B cell (primary cell): ENCODE measurements at regions of chr10 and their contacts with region 1.

Region 1: GRCh38 chr10:62082729-62083411 is 181.4 kb downstream of the ARID5B start:
- DNase-seq: no peak
- ATAC-seq: peak; percentile 29
- H3K4me3 ChIP-seq: peak overlapping the region; percentile 10 to 38 (median 36)
- H3K4me3 Mint-ChIP-seq: peak overlapping the region; percentile 79
- H3K27ac ChIP-seq: peak overlapping the region; percentile 90 to 91
- H3K27ac Mint-ChIP-seq: peak overlapping the region; percentile 86
- H3K4me1 ChIP-seq: peaks cover 76 to 78% of the 10 kb centered on the region in 2 donors
- H3K4me1 Mint-ChIP-seq: peaks cover 79% of the 10 kb centered on the region
- H3K27me3 ChIP-seq: no peaks in the 10 kb centered on the region
- H3K27me3 Mint-ChIP-seq: no peaks in the 10 kb centered on the region
- CTCF ChIP-seq: no peak

Region 2: DNA sequence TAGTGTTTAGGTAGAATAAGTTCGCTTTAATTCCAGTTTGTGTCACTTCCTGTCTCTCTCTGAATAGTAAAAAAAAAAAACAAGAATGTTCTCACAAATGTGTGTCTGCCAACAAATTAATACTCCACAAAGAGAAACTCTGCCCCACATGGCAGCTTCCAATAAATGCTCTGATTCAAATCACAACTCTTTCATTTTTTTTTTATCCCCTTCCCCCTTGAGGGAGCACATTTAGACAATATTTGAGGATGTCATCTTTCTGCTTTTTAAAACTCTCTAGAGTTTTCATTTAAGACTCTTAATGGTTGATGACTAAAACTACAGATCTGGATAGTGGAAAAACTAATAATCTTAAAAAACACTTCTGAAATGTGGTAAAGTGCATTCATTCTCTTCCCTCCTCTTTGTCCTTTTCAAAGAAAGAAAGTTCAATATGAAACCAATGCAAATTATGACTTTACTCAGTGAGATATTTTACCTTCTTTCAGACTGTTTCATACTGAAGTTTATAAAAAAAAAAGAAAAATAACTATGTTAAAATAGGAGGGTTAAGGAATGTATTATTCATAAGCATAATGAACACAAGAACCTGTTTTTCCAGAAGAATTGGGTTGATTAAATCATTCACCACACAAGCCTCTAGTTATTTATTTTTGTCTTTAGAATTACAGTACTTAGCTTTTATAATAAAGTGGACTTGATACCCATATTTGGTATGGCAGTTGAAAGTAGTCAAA is 139.0 kb before region 1 on chr10:
- CTCF ChIA-PET with region 1: no interaction called
- POLR2A ChIA-PET with region 1: no interaction called
- intact Hi-C with region 1: no loop called
- DNase-seq: peak; percentile 71
- ATAC-seq: peak; percentile 21
- H3K4me3 ChIP-seq: no peak overlapping the region
- H3K4me3 Mint-ChIP-seq: peak overlapping the region; percentile 74
- H3K27ac ChIP-seq: peak overlapping the region; percentile 86 to 91
- H3K27ac Mint-ChIP-seq: peak overlapping the region; percentile 86
- H3K4me1 ChIP-seq: peaks cover 58 to 61% of the 10 kb centered on the region in 2 donors
- H3K4me1 Mint-ChIP-seq: peaks cover 54% of the 10 kb centered on the region
- H3K27me3 ChIP-seq: no peaks in the 10 kb centered on the region
- H3K27me3 Mint-ChIP-seq: no peaks in the 10 kb centered on the region
- CTCF ChIP-seq: no peak

Region 3: GRCh38 chr10:62071846-62072281 is 11.0 kb before region 1 on chr10:
- CTCF ChIA-PET with region 1: no interaction called
- POLR2A ChIA-PET with region 1: no interaction called
- intact Hi-C with region 1: no loop called
- DNase-seq: no peak
- ATAC-seq: no peak
- H3K4me3 ChIP-seq: no peak overlapping the region
- H3K4me3 Mint-ChIP-seq: no peak overlapping the region
- H3K27ac ChIP-seq: peak overlapping the region in 1 of 2 donors; percentile 14
- H3K27ac Mint-ChIP-seq: peak overlapping the region; percentile 65
- H3K4me1 ChIP-seq: peaks cover 4 to 11% of the 10 kb centered on the region in 2 donors
- H3K4me1 Mint-ChIP-seq: peaks cover 58% of the 10 kb centered on the region
- H3K27me3 ChIP-seq: no peaks in the 10 kb centered on the region
- H3K27me3 Mint-ChIP-seq: no peaks in the 10 kb centered on the region
- CTCF ChIP-seq: no peak

Region 4: DNA sequence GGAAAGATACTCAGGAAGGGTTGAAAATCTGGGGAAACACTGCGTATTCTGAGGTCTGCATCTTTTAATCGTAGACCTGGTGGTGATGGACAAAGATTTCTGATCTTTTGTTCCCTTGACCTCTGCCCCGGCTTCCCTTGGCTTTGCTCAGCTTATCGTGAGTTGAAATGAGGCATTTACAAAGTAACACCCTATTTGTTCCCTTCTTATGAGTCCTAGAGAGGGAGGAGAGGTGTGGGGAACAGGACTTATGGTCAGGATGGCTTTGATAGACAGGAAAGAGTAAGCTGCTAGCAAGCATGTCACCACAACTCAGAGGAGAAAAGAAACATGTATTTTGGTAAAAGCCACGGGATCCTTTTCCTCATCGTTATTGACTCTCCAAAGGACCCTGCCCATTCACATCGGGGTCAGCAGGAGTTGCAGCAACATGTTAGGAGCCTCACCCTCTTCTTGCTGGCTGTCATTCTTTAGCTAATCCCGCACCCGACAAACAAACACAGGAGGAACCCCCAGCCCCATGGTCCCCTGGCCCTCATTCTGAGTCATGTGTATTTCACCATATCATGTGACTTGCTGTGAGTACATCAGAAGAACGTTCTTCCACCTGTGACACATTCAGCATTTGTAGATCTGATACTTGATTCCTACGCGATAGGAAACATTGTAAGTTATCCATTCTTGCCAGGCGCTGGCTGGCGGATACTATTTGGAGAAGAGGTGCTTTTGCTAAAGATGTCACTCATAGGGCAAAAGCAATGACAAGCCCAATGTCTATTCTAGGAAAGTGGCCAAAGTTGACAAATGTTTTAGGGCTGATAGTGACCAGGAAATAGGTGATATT is 15.6 kb after region 1 on chr10:
- CTCF ChIA-PET with region 1: interaction called, 4 read pairs
- POLR2A ChIA-PET with region 1: interaction called, 3 read pairs
- intact Hi-C with region 1: loop called (anchors 2 kb)
- DNase-seq: no peak
- ATAC-seq: peak; percentile 18
- H3K4me3 ChIP-seq: no peak overlapping the region
- H3K4me3 Mint-ChIP-seq: no peak overlapping the region
- H3K27ac ChIP-seq: peak overlapping the region in 1 of 2 donors; percentile 13
- H3K27ac Mint-ChIP-seq: peak overlapping the region; percentile 26
- H3K4me1 ChIP-seq: peaks cover 0 to 7% of the 10 kb centered on the region in 2 donors
- H3K4me1 Mint-ChIP-seq: peaks cover 34% of the 10 kb centered on the region
- H3K27me3 ChIP-seq: no peaks in the 10 kb centered on the region
- H3K27me3 Mint-ChIP-seq: no peaks in the 10 kb centered on the region
- CTCF ChIP-seq: no peak

Region 5: DNA sequence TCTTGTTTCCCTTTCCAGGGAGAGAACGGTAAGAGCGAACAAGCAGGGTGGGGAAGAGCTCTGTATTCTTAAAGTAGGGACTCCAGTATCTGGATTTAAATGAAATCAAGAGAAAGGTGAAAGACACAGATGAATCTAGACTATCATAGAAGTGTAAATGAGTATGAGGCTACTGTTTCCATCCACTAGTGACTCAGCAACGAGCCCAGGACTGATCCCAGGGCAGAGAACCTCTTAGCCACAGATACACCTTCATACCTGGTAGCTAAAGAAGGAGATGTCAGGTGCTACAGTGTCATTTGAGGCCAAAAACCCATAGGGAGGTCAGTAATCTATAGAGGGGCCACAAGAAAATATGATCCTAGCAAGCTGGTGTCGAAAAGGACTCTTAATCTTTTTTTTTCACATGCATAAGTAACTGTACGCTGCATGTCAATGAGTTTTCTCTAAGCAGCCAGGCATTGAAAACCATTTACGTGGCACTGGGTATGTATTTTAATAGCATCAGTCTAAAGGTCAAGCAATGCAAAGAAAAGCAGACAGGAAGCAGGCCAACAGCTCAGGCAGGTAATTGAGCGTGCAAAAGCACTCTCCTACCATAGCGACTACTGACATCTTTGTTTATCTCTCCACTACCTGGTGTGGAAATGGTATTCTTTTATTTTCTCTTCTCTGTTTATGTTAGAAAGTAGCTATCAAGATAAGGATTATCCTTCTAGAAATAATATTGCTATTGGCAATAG is 824.8 kb after region 1 on chr10:
- CTCF ChIA-PET with region 1: no interaction called
- POLR2A ChIA-PET with region 1: no interaction called
- intact Hi-C with region 1: no loop called
- DNase-seq: no peak
- ATAC-seq: peak; percentile 61
- H3K4me3 ChIP-seq: no peak overlapping the region
- H3K4me3 Mint-ChIP-seq: peak overlapping the region; percentile 13
- H3K27ac ChIP-seq: no peak overlapping the region
- H3K27ac Mint-ChIP-seq: no peak overlapping the region
- H3K4me1 ChIP-seq: peaks cover 35% of the 10 kb centered on the region in 2 donors
- H3K4me1 Mint-ChIP-seq: peaks cover 50% of the 10 kb centered on the region
- H3K27me3 ChIP-seq: no peaks in the 10 kb centered on the region
- H3K27me3 Mint-ChIP-seq: no peaks in the 10 kb centered on the region
- CTCF ChIP-seq: no peak